CD8-positive, alpha-beta T cell (primary cell): ENCODE measurements at regions of chr2 and their contacts with region 1.

Region 1: GRCh38 chr2:157989227-157989626 is 112.4 kb upstream of the UPP2 start:
- DNase-seq: no peak
- ATAC-seq: no peak
- H3K4me3 ChIP-seq: no peak overlapping the region
- H3K4me3 Mint-ChIP-seq: no peak overlapping the region
- H3K27ac ChIP-seq: no peak overlapping the region
- H3K27ac Mint-ChIP-seq: no peak overlapping the region
- H3K4me1 ChIP-seq: no peaks in the 10 kb centered on the region
- H3K4me1 Mint-ChIP-seq: no peaks in the 10 kb centered on the region
- H3K27me3 ChIP-seq: no peaks in the 10 kb centered on the region
- H3K27me3 Mint-ChIP-seq: peaks cover 3% of the 10 kb centered on the region
- CTCF ChIP-seq: no peak

Region 2: GRCh38 chr2:157777427-157777826 is 211.8 kb before region 1 on chr2:
- CTCF ChIA-PET with region 1: interaction called, 4 read pairs
- POLR2A ChIA-PET with region 1: no interaction called
- intact Hi-C with region 1: loop called in 1 of 2 experiments (anchors 1 kb)
- DNase-seq: peak in 8 of 9 experiments; percentile 4 to 55 (median 40)
- ATAC-seq: no peak
- H3K4me3 ChIP-seq: no peak overlapping the region
- H3K4me3 Mint-ChIP-seq: no peak overlapping the region
- H3K27ac ChIP-seq: no peak overlapping the region
- H3K27ac Mint-ChIP-seq: no peak overlapping the region
- H3K4me1 ChIP-seq: no peaks in the 10 kb centered on the region
- H3K4me1 Mint-ChIP-seq: peaks cover 11% of the 10 kb centered on the region
- H3K27me3 ChIP-seq: no peaks in the 10 kb centered on the region
- H3K27me3 Mint-ChIP-seq: no peaks in the 10 kb centered on the region
- CTCF ChIP-seq: peak; percentile 68

Region 3: DNA sequence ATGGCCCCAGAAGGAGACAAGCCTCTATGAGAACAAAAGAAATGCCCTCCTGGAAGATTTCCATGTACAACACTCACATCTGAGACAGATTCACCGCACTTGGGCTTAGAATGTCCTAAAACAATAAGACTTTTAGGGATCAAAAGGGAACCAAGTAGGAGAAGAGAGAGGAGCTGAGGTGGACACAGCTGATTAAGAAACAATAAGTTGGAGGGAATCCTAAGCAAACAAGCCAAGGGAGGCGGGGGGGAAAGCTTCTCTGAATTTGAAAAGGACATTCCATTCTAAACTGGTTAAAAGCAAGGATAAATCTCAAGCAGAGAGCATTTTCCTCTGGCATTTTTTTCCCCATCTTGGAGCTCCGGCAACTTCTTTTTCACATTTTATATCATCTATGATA is 123.0 kb before region 1 on chr2:
- CTCF ChIA-PET with region 1: no interaction called
- POLR2A ChIA-PET with region 1: no interaction called
- intact Hi-C with region 1: no loop called
- DNase-seq: no peak
- ATAC-seq: no peak
- H3K4me3 ChIP-seq: no peak overlapping the region
- H3K4me3 Mint-ChIP-seq: no peak overlapping the region
- H3K27ac ChIP-seq: no peak overlapping the region
- H3K27ac Mint-ChIP-seq: no peak overlapping the region
- H3K4me1 ChIP-seq: no peaks in the 10 kb centered on the region
- H3K4me1 Mint-ChIP-seq: peaks cover 37% of the 10 kb centered on the region
- H3K27me3 ChIP-seq: no peaks in the 10 kb centered on the region
- H3K27me3 Mint-ChIP-seq: no peaks in the 10 kb centered on the region
- CTCF ChIP-seq: no peak

Region 4: GRCh38 chr2:158045362-158045761 is 56.1 kb after region 1 on chr2:
- CTCF ChIA-PET with region 1: no interaction called
- POLR2A ChIA-PET with region 1: no interaction called
- intact Hi-C with region 1: no loop called
- DNase-seq: no peak
- ATAC-seq: no peak
- H3K4me3 ChIP-seq: no peak overlapping the region
- H3K4me3 Mint-ChIP-seq: no peak overlapping the region
- H3K27ac ChIP-seq: no peak overlapping the region
- H3K27ac Mint-ChIP-seq: no peak overlapping the region
- H3K4me1 ChIP-seq: no peaks in the 10 kb centered on the region
- H3K4me1 Mint-ChIP-seq: peaks cover 3% of the 10 kb centered on the region
- H3K27me3 ChIP-seq: peaks cover 0 to 3% of the 10 kb centered on the region in 2 experiments
- H3K27me3 Mint-ChIP-seq: peaks cover 10% of the 10 kb centered on the region
- CTCF ChIP-seq: no peak